Activated naive CD4-positive, alpha-beta T cell treated with anti-CD3 and anti-CD28 coated beads for 36 hours (primary cell): ENCODE measurements at regions of chr20 and their contacts with region 1.

Region 1: DNA sequence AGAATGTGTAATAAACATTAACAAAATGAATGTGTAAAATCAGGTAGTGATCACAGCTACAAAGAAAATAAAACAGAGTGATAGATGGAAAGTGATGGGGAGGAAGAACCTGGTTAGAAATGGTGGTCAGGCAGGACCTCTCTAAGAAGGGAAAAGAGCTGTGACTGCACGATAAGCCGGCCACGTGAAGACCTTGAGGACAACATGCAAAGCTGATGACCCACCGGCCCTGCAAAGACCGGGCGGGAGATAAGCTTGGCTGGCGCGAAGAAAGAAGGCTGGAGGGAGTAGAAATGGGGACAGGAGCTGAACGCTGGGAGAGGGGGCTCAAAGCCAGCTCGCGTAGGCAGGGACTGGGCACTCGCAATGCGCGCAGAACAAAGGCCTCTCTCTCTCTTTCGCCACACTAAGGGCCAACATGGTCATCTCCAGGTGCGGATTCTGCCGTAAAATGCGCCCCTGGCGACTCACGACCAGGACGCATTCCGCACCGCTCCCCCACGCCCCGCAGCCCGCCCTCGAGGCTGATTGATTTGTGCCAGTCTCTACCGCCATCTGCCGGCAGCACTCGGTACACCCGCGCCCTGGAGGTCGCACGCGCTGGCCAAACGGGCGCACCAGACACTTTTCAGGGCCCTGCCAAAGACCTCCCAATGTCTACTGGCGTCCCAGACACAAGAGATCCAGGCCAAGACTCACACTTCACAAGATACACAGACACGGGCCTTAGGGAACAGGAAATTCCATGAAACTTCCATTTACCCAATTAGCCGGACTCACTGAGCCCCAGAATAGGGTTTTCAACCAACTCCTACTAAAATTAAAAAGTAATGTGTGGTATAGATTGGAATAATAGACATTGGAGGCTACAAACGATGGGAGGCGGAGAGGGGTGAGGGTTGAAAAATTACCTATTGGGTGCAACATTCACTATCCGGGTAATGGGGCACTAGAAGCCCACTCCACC is 9.4 kb downstream of the DEFB132 start:
- DNase-seq: peak; percentile 93
- H3K4me3 Mint-ChIP-seq: peak overlapping the region; percentile 78
- H3K27ac Mint-ChIP-seq: peak overlapping the region; percentile 38
- H3K4me1 Mint-ChIP-seq: peaks cover 14% of the 10 kb centered on the region
- H3K27me3 Mint-ChIP-seq: peaks cover 3% of the 10 kb centered on the region

Region 2: GRCh38 chr20:208942-209566 is 57.8 kb before region 1 on chr20:
- CTCF ChIA-PET with region 1: interaction called, 44 read pairs
- intact Hi-C with region 1: loop called (anchors 1 kb)
- DNase-seq: peak; percentile 41
- H3K4me3 Mint-ChIP-seq: no peak overlapping the region
- H3K27ac Mint-ChIP-seq: no peak overlapping the region
- H3K4me1 Mint-ChIP-seq: no peaks in the 10 kb centered on the region
- H3K27me3 Mint-ChIP-seq: no peaks in the 10 kb centered on the region

Region 3: GRCh38 chr20:214383-214782 is 52.5 kb before region 1 on chr20:
- CTCF ChIA-PET with region 1: interaction called, 13 read pairs
- intact Hi-C with region 1: loop called (anchors 1 kb)
- DNase-seq: no peak
- H3K4me3 Mint-ChIP-seq: no peak overlapping the region
- H3K27ac Mint-ChIP-seq: no peak overlapping the region
- H3K4me1 Mint-ChIP-seq: no peaks in the 10 kb centered on the region
- H3K27me3 Mint-ChIP-seq: no peaks in the 10 kb centered on the region

Region 4: DNA sequence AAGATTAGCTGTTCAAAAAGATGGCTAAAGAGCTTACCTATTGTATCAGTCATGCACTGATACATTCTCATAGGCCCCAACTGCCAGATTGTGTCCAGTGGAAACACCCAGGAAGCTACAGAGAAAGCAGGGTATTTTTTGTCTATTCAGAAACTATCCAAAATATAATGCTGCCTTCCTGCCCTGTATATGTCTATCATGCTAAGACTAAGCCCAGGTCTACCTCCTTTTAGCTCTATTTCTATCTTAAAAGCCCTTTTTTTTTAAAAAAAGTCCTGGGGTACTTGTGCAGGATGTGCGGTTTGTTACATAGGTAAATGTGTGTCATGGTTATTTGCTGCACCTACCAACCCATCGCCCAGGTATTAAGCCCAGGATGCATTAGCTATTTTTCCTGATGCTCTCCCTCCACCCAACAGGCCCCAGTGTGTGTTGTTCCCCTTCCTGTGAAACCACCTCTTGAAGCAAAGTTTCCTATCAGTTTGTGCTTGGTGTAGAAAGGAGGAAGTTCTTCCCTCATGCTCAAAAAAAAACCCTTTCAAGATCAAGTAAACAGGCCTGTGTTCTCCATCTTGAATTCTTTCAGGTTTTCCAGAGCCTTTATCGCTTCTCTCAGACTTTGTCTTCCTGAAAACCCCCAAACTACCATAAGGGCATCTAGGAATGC is 39.3 kb before region 1 on chr20:
- CTCF ChIA-PET with region 1: interaction called, 12 read pairs
- intact Hi-C with region 1: loop called (anchors 5 kb)
- DNase-seq: no peak
- H3K4me3 Mint-ChIP-seq: no peak overlapping the region
- H3K27ac Mint-ChIP-seq: peak overlapping the region; percentile 64
- H3K4me1 Mint-ChIP-seq: peaks cover 30% of the 10 kb centered on the region
- H3K27me3 Mint-ChIP-seq: no peaks in the 10 kb centered on the region

Region 5: GRCh38 chr20:235891-236290 is 31.0 kb before region 1 on chr20:
- CTCF ChIA-PET with region 1: interaction called, 15 read pairs
- intact Hi-C with region 1: loop called (anchors 1 kb)
- DNase-seq: no peak
- H3K4me3 Mint-ChIP-seq: no peak overlapping the region
- H3K27ac Mint-ChIP-seq: no peak overlapping the region
- H3K4me1 Mint-ChIP-seq: peaks cover 28% of the 10 kb centered on the region
- H3K27me3 Mint-ChIP-seq: no peaks in the 10 kb centered on the region

Region 6: GRCh38 chr20:251354-251753 is 15.5 kb before region 1 on chr20:
- CTCF ChIA-PET with region 1: interaction called, 14 read pairs
- intact Hi-C with region 1: no loop called
- DNase-seq: no peak
- H3K4me3 Mint-ChIP-seq: no peak overlapping the region
- H3K27ac Mint-ChIP-seq: no peak overlapping the region
- H3K4me1 Mint-ChIP-seq: peaks cover 9% of the 10 kb centered on the region
- H3K27me3 Mint-ChIP-seq: no peaks in the 10 kb centered on the region

Region 7: DNA sequence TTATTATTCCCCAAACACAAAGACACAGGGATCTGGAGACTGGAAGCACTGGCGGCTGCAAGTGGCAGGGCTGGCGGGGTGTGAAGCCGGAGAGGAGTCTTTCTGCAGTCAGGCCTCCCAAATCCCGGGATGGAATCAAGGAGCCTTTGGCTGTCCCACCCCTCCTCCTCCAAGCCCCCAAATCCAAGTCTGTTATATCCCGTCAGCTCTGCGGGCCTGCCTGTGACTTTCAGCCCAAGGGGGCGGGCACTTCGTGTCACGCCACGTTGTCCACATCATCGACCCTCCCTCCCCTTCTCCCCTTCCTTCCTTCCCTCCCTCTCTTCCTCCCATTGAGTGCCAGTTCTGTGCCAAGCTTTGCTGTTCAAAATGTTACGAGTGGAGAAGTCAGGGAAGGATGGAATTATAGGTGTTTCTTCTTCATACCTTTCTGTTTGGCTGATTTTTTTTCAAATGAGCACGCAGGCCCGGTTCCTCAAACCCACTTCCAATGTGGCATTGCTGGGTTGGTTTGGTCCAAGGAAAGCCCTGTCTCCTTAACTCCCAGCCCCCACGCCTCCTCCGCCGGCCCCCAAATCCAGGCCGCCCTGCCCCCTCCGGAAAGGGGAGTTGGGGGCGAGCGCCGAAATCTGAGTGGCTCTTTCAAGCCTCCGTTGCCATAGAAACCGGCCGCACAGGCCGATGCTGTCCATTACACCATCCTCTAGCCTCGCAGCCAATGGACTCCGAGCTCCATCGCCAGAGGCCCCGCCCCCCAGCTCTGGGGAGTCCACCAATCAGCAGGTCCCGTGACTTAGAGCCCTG is 43.2 kb after region 1 on chr20:
- CTCF ChIA-PET with region 1: interaction called, 5 read pairs
- intact Hi-C with region 1: loop called (anchors 1 kb)
- DNase-seq: peak; percentile 93
- H3K4me3 Mint-ChIP-seq: peak overlapping the region; percentile 74
- H3K27ac Mint-ChIP-seq: peak overlapping the region; percentile 43
- H3K4me1 Mint-ChIP-seq: peaks cover 11% of the 10 kb centered on the region
- H3K27me3 Mint-ChIP-seq: no peaks in the 10 kb centered on the region

Region 8: GRCh38 chr20:688809-689212 is 421.9 kb after region 1 on chr20:
- CTCF ChIA-PET with region 1: no interaction called
- intact Hi-C with region 1: no loop called
- DNase-seq: no peak
- H3K4me3 Mint-ChIP-seq: no peak overlapping the region
- H3K27ac Mint-ChIP-seq: no peak overlapping the region
- H3K4me1 Mint-ChIP-seq: no peaks in the 10 kb centered on the region
- H3K27me3 Mint-ChIP-seq: peaks cover 16% of the 10 kb centered on the region

Region 9: GRCh38 chr20:1062334-1063010 is 795.6 kb after region 1 on chr20:
- CTCF ChIA-PET with region 1: no interaction called
- intact Hi-C with region 1: no loop called
- DNase-seq: no peak
- H3K4me3 Mint-ChIP-seq: no peak overlapping the region
- H3K27ac Mint-ChIP-seq: no peak overlapping the region
- H3K4me1 Mint-ChIP-seq: no peaks in the 10 kb centered on the region
- H3K27me3 Mint-ChIP-seq: peaks cover 3% of the 10 kb centered on the region